Activated T-helper 2 cell treated with anti-CD3 and anti-CD28 coated beads, Interferon-gamma antibody, Interleukin-2, Interleukin-4, amounts not matched to agents 10 μg/mL and 5 μg/mL and 100 μg/mL, durations not matched to agents 14 hours and 24 hours and 36 hours (primary cell): ENCODE measurements at regions of chr9 and their contacts with region 1.

Region 1: DNA sequence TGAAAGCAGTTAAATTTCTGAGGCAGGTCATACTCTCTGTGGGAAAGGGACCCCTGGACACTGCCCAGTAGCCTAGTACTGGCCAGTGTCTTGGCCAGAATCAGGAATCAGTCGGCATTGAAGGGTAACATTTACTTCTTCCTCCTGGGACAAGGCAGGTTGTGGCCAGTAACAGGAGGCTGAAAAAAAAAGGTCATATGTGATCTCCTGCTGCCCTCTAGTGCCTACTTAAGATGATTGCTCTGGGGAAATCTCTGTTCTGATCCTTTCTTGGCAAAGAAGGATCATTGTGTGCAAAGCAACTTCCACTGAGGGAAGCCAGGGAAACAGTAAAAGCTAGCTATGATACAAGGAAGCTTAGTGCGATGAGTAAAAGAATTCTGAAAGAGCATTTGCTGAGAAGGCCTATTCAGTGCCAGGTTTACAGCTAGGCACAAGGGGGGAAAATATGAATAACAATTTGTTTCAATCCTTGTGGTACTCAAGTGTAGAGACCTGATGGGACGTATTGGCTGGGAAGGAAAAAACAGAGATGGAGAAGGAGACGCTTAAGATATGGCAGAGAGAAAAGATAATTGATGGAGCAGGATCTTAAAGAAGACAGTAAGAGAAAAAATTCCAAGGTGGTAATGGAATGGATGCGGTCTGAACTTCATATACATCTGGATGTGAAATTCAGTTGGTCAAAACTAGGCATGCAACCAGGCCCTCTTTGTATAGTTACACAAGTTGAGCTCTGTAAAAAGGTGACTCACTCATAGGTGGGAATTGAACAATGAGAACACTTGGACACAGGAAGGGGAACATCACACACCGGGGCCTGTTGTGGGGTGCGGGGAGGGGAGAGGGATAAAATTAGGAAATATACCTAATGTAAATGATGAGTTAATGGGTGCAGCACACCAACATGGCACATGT is 25.8 kb upstream of the TRIM32 start:
- DNase-seq: no peak
- H3K4me3 Mint-ChIP-seq: no peak overlapping the region
- H3K27ac Mint-ChIP-seq: no peak overlapping the region
- H3K4me1 Mint-ChIP-seq: no peaks in the 10 kb centered on the region
- H3K27me3 Mint-ChIP-seq: no peaks in the 10 kb centered on the region

Region 2: GRCh38 chr9:116589392-116590354 is 71.6 kb before region 1 on chr9:
- intact Hi-C with region 1: loop called (anchors 2 kb)
- DNase-seq: no peak
- H3K4me3 Mint-ChIP-seq: no peak overlapping the region
- H3K27ac Mint-ChIP-seq: no peak overlapping the region
- H3K4me1 Mint-ChIP-seq: no peaks in the 10 kb centered on the region
- H3K27me3 Mint-ChIP-seq: no peaks in the 10 kb centered on the region